A673 (cell line): ENCODE measurements at regions of chr6 and their contacts with region 1.

Region 1: DNA sequence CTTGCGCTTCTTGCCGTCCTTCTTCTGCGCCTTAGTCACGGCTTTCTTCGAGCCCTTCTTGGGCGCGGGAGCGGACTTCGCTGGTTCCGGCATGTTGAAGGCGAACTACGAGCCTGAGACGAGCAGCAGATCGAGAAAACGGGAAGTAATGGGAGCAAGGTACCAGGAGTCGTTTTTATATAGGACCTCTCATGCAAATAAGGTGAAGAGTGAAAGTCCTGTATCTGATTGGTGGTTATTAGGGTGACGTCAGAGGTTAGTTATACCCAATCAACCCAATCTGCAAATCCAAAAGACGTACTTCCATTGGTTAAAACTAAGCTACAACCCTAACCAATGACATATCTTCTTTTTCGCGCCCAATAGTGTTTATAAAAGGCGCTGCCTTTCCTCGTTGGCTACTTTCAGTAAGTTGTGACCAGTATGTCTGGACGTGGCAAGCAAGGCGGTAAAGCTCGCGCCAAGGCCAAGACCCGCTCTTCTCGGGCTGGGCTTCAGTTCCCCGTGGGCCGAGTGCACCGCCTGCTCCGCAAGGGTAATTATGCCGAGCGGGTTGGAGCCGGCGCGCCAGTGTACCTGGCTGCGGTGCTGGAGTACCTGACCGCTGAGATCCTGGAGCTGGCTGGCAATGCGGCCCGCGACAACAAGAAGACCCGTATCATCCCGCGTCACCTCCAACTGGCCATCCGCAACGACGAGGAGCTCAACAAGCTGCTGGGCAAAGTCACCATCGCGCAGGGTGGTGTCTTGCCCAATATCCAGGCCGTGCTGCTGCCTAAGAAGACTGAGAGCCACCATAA is 100.6 kb upstream of the PRSS16 start:
- DNase-seq: peak; percentile 98
- H3K4me3 ChIP-seq: peak overlapping the region; percentile 53
- H3K27ac ChIP-seq: peak overlapping the region; percentile 92
- H3K4me1 ChIP-seq: peaks cover 5% of the 10 kb centered on the region
- H3K27me3 ChIP-seq: no peaks in the 10 kb centered on the region
- CTCF ChIP-seq: no peak

Region 2: DNA sequence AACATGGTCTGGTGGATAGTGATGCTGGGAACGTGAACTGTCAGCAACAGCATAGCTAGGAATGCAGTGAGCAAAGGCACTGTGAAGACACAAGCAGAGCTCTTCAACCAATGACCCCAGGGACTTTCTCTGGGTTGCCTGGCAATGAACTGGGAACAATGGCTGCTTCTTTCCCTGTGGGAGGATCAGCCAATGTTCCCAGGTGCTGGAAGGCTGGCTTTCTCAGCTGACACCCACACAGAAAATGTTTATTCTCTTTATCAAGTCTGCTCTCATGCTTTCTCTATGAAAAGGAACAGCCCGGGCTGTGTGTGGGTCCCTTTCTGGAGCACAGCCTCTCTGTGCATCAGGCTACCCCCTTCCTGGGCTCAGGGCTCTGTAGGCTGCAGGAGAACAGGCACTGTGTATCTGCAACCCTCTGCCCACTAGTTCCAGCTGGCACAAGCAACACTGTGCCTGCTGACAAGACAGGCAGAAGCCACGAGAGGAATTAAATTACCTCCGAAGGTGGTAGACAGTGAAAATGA is 1005.5 kb before region 1 on chr6:
- CTCF ChIA-PET with region 1: no interaction called
- POLR2A ChIA-PET with region 1: interaction called, 16 read pairs
- intact Hi-C with region 1: no loop called
- DNase-seq: no peak
- H3K4me3 ChIP-seq: no peak overlapping the region
- H3K27ac ChIP-seq: peak overlapping the region; percentile 96
- H3K4me1 ChIP-seq: peaks cover 41% of the 10 kb centered on the region
- H3K27me3 ChIP-seq: no peaks in the 10 kb centered on the region
- CTCF ChIP-seq: no peak

Region 3: GRCh38 chr6:26270903-26271667 is 875.8 kb before region 1 on chr6:
- CTCF ChIA-PET with region 1: no interaction called
- POLR2A ChIA-PET with region 1: no interaction called
- intact Hi-C with region 1: loop called (anchors 5 kb)
- DNase-seq: peak; percentile 97
- H3K4me3 ChIP-seq: peak overlapping the region; percentile 66
- H3K27ac ChIP-seq: peak overlapping the region; percentile 94
- H3K4me1 ChIP-seq: peaks cover 16% of the 10 kb centered on the region
- H3K27me3 ChIP-seq: no peaks in the 10 kb centered on the region
- CTCF ChIP-seq: no peak

Region 4: GRCh38 chr6:27132532-27133280 is 14.2 kb before region 1 on chr6:
- CTCF ChIA-PET with region 1: no interaction called
- POLR2A ChIA-PET with region 1: interaction called, 74 read pairs
- intact Hi-C with region 1: loop called (anchors 2 kb)
- DNase-seq: peak; percentile 99
- H3K4me3 ChIP-seq: peak overlapping the region; percentile 59
- H3K27ac ChIP-seq: peak overlapping the region; percentile 96
- H3K4me1 ChIP-seq: peaks cover 32% of the 10 kb centered on the region
- H3K27me3 ChIP-seq: no peaks in the 10 kb centered on the region
- CTCF ChIP-seq: no peak

Region 5: GRCh38 chr6:27624694-27625262 is 477.9 kb after region 1 on chr6:
- CTCF ChIA-PET with region 1: no interaction called
- POLR2A ChIA-PET with region 1: interaction called, 12 read pairs
- intact Hi-C with region 1: no loop called
- DNase-seq: no peak
- H3K4me3 ChIP-seq: no peak overlapping the region
- H3K27ac ChIP-seq: no peak overlapping the region
- H3K4me1 ChIP-seq: no peaks in the 10 kb centered on the region
- H3K27me3 ChIP-seq: no peaks in the 10 kb centered on the region
- CTCF ChIP-seq: no peak

Region 6: GRCh38 chr6:27809939-27810767 is 663.2 kb after region 1 on chr6:
- CTCF ChIA-PET with region 1: no interaction called
- POLR2A ChIA-PET with region 1: interaction called, 14 read pairs
- intact Hi-C with region 1: loop called (anchors 5 kb)
- DNase-seq: peak; percentile 97
- H3K4me3 ChIP-seq: peak overlapping the region; percentile 70
- H3K27ac ChIP-seq: peak overlapping the region; percentile 83
- H3K4me1 ChIP-seq: peaks cover 18% of the 10 kb centered on the region
- H3K27me3 ChIP-seq: no peaks in the 10 kb centered on the region
- CTCF ChIP-seq: peak; percentile 30; the same call in 1 of the 2 replicates